ENCODE measurements at regions of chr6 and their contacts with region 1.

Region 1: GRCh38 chr6:133916650-133917151 is 27.8 kb downstream of the TCF21 start:
- DNase-seq: peak; percentile 86 to 91
- ATAC-seq: peak; percentile 69 to 85 (median 84)
- H3K4me3 ChIP-seq: no peak overlapping the region
- H3K27ac ChIP-seq: no peak overlapping the region
- H3K4me1 ChIP-seq: no peaks in the 10 kb centered on the region
- H3K27me3 ChIP-seq: no peaks in the 10 kb centered on the region
- CTCF ChIP-seq: peak; percentile 88

Region 2: GRCh38 chr6:133568970-133569889 is 347.5 kb before region 1 on chr6:
- intact Hi-C with region 1: loop called (anchors 1 to 2 kb)
- DNase-seq: peak; percentile 16 to 52
- ATAC-seq: peak; percentile 89 to 97 (median 96)
- H3K4me3 ChIP-seq: peak overlapping the region; percentile 69
- H3K27ac ChIP-seq: peak overlapping the region; percentile 63
- H3K4me1 ChIP-seq: no peaks in the 10 kb centered on the region
- H3K27me3 ChIP-seq: no peaks in the 10 kb centered on the region
- CTCF ChIP-seq: peak; percentile 95

Region 3: DNA sequence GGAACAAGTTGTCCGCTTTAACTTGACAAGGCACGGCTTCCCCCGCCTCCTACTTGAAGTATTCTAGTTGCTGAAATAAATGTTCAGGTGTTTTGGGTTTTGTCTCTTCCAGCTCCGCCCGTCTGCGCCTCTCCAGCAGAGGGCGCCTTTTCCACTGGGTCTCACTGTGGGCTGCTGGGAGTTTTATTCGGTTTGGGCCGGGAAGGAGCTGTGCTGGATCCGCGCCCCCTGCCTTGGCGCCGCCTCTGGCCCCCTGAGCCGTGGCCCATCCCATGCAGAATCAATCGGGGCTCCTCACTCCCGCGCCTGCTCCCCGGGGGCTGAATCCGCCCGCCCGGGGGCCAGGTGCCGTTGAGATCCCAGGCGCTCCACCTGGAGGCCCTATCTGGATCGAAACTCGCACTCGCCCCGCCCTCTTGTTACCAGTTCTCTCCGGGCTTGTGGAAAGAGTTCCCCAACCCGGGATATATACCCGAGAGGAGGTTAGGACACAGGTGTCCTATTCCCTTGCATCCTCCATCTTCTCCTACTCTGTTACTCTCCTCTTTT is 78.8 kb before region 1 on chr6:
- intact Hi-C with region 1: loop called in 1 of 2 experiments (anchors 5 kb)
- DNase-seq: peak; percentile 40 to 59
- ATAC-seq: peak in 3 of 4 donors; percentile 49 to 78 (median 61)
- H3K4me3 ChIP-seq: peak overlapping the region; percentile 63
- H3K27ac ChIP-seq: no peak overlapping the region
- H3K4me1 ChIP-seq: no peaks in the 10 kb centered on the region
- H3K27me3 ChIP-seq: peaks cover 0 to 4% (median 3%) of the 10 kb centered on the region in 3 donors
- CTCF ChIP-seq: peak; percentile 61

Region 4: DNA sequence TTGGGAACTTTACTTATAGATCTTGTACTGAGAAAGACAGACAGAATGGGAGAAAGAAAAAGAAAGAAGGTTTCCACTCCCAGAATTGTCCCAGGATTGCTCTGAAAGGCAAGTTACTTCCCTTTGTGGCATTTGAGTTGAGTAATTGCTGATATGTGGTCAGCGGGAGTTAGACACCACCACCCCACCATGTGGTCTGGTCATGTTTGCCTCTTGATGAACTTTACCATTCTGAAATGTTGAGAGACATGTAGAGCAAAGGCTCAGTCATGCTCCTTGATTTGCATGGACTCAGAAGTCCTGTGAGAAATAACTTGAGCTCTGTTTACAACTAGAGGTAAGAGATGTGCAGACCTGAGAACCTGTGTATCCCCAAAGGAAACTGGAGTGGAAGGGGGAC is 10.7 kb before region 1 on chr6:
- intact Hi-C with region 1: loop called in 1 of 2 experiments (anchors 1 kb)
- DNase-seq: no peak
- ATAC-seq: no peak
- H3K4me3 ChIP-seq: no peak overlapping the region
- H3K27ac ChIP-seq: no peak overlapping the region
- H3K4me1 ChIP-seq: no peaks in the 10 kb centered on the region
- H3K27me3 ChIP-seq: peaks cover 0 to 4% (median 0%) of the 10 kb centered on the region in 3 donors
- CTCF ChIP-seq: no peak

Region 5: DNA sequence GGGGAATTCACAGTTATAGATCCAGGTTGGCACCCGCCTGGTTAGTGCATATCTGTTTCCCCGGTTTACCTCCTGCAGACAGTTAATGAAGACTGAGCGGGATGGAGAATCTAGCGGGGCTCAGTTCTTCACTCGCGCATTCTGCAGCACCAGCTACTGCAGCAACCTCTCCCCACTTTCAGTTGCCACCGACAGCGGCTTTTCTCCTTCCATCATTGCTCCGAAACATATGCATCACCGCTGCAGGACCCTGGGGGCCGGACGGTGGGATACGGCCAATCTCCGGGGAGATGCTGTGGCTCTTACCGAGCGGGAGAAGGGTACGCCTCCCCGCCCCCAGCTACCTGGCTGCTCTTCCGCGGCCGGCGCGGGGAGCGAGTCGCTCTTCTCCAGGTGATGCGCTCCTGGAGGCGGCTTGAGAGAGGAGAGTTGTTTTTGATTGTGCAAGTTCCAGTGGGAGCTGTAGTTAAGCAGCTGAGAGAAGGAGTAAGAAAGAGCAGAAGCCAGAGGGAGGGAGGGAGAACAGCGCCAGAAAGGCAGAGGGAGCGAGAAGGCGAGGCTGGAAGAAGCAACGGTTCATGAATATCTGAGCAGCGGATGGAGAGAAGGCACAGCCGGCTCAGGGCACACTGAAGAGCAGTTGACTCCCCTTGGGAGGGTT is 400.9 kb after region 1 on chr6 and contains the start of gene SGK1:
- intact Hi-C with region 1: no loop called
- DNase-seq: peak in 1 of 2 donors; percentile 21
- ATAC-seq: peak; percentile 54 to 83 (median 57)
- H3K4me3 ChIP-seq: peak within 1 kb of the TSS; percentile 65
- H3K27ac ChIP-seq: no peak within 1 kb of the TSS
- H3K4me1 ChIP-seq: peaks cover 11% of the 10 kb centered on the region
- H3K27me3 ChIP-seq: no peaks in the 10 kb centered on the region
- CTCF ChIP-seq: no peak
- total RNA-seq, gene SGK1: 42.0 to 125 (median 80.5) TPM

Measured in psoas muscle (tissue), 8 donors.